ENCODE measurements at regions of chr1 and their contacts with region 1.

Region 1: DNA sequence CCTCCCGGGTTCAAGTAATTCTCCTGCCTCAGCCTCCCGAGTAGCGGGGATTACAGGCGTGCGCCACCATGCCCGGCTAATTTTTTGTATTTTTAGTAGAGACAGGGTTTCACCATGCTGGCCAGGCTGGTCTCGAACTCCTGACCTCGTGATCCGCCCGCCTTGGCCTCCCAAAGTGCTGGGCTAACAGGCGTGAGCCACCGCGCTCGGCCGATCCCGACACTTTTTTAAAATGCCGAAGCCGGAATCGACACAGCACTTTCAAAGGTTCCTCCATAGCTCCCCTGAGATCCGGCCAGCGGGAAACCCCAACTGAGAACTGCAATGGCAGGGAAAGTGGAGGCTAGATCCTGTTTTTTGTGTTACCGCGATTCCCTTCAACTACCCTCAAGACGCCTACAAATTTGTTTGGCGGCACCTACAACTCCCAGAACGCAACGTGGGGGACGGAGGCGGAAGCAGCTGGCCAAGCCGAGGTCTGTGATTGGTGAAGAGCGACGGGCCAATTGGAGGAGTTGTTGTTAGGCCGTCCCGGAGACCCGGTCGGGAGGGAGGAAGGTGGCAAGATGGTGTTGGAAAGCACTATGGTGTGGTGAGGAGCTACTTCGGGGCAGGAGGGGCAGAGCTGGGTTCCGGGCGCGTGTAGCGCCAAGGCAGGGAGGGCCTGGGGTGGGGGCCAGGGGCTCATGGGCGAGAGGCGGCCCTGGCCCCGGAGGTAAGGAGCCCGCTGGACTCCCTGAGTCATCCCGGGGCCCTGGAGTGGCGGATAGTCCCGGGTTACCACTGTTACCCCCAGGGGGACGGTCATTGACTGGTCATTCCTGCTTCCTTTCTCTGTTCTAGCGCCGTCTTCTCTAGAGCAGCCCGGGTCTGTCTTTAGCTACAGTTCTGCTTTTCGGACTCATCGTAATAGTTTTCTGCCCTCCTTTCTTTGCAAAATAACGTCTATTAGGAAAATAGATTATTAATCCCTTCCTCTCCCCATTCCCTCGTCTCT is at the start of gene PSMD4:
- DNase-seq: peak; percentile 88
- H3K4me3 ChIP-seq: peak within 1 kb of the TSS; percentile 84
- H3K27ac ChIP-seq: peak within 1 kb of the TSS; percentile 83
- H3K27me3 ChIP-seq: no peaks in the 10 kb centered on the region
- CTCF ChIP-seq: no peak
- polyA plus RNA-seq, gene PSMD4: 258 and 275 TPM in 2 replicates

Region 2: DNA sequence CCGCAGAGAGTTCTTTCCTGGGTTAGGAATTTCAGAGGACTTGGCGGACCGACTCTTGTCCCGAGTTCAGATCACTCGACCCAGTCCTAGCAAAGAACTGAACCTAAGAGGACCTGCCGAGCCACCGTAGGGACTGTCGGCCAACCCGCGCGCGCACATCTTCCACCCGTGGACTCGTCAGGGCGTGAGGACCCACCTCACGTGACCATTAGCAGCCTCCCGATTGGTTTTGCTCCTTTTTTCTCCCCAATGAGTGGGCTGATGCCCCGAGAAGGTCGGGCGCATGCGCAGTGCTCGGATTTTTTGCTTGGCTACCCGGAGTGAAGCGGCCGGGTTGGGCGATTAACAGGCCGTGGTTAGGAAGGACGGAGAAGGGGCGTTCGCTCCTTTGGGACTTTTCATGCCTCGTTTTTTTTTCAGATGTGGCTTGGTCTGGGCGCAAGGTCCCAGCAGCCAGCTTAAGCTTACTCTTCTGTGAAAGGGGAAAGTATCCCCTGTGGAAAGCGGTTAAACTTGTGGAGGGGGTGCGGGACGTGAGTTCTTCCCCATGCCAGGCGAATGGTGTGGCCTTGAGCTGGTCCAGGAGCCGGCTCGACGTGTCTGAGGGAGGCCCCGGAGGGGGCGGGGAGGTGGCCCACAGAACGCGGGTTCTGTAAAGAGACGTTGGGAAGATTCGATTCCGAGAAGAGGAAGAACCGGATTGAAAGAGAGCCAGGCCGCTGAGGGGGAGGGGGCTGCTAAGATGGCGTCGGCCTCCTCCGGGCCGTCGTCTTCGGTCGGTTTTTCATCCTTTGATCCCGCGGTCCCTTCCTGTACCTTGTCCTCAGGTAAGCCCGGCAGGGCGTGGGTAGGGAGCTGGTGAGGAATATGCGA is 56.0 kb before region 1 on chr1 and contains the start of gene PIP5K1A:
- CTCF ChIA-PET with region 1: interaction called, 32 read pairs
- POLR2A ChIA-PET with region 1: interaction called, 5 read pairs
- DNase-seq: peak; percentile 95
- H3K4me3 ChIP-seq: peak within 1 kb of the TSS; percentile 97
- H3K27ac ChIP-seq: peak within 1 kb of the TSS; percentile 94
- H3K27me3 ChIP-seq: no peaks in the 10 kb centered on the region
- CTCF ChIP-seq: no peak
- polyA plus RNA-seq, gene PIP5K1A: 170 and 179 TPM in 2 replicates

Region 3: DNA sequence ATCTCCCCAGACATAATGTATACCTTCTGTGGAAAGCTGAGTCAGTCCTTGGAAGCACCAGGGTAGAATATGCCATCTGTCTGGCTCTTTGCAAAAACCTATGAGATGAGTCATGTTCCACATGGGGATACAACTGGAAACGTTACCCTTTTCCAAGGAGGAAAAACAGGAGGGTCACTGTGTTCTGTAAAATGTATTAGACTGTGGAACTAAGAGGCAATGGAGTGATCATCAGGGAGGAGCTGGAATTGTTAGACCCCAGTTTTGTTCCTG is 16.1 kb before region 1 on chr1:
- CTCF ChIA-PET with region 1: interaction called, 21 read pairs
- POLR2A ChIA-PET with region 1: no interaction called
- DNase-seq: peak; percentile 80
- H3K4me3 ChIP-seq: no peak overlapping the region
- H3K27ac ChIP-seq: no peak overlapping the region
- H3K27me3 ChIP-seq: no peaks in the 10 kb centered on the region
- CTCF ChIP-seq: no peak

Region 4: GRCh38 chr1:151273925-151274466 is 19.5 kb after region 1 on chr1:
- CTCF ChIA-PET with region 1: interaction called, 6 read pairs
- POLR2A ChIA-PET with region 1: interaction called, 13 read pairs
- DNase-seq: no peak
- H3K4me3 ChIP-seq: no peak overlapping the region
- H3K27ac ChIP-seq: no peak overlapping the region
- H3K27me3 ChIP-seq: peaks cover 3% of the 10 kb centered on the region
- CTCF ChIP-seq: no peak